ENCODE measurements at regions of chr15 and their contacts with region 1.

Region 1: DNA sequence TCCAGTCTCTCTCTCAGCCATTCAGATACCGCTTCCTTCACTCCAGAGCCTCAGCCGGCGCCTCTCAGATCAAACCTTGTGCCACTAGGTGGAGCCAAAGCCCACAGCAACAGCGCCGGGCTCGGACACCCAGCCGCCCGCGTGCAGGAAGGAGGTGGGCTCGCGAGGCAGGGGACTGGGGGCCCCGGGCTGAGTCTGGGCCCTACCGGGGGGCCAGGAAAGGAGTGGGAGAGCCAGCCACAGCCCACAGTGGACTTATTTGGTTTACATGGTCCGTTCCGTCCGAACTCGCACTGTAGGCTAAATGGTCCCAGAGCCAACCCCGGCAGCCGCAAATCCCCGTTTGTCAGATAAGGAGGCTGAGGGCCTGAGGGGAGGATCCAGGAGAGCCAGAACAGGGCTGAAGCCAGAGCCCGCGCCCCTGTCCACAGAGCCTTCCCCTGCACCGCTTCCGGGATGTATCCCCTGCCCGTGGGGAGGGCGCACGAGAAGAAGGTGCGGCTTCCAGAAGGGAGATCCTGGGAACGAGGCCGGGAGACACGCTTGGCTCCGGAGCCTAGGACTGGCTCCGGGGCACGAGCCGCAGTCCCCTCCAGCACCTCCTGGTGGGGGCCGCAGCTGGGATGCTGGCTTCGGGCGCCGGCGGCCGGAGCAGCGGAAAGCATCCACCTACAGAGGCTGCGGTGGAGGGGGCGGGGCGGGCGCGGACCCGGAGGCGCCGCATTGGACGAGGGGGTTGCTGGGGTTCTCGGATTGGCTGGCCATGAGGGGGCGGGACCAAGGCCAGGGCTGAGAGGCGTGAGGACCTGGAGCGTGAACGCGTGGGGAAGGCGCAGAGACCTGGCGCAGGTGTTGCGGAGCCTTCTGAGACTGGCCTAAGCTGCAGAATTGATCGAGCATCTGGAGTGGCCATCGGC is 6.5 kb upstream of the CYP11A1 start:
- DNase-seq: peak; percentile 95
- ATAC-seq: peak; percentile 99

Region 2: GRCh38 chr15:74438721-74439316 is 64.8 kb after region 1 on chr15:
- intact Hi-C with region 1: loop called in 1 of 2 experiments (anchors 2 kb)
- DNase-seq: peak; percentile 74
- ATAC-seq: peak; percentile 59

Region 3: DNA sequence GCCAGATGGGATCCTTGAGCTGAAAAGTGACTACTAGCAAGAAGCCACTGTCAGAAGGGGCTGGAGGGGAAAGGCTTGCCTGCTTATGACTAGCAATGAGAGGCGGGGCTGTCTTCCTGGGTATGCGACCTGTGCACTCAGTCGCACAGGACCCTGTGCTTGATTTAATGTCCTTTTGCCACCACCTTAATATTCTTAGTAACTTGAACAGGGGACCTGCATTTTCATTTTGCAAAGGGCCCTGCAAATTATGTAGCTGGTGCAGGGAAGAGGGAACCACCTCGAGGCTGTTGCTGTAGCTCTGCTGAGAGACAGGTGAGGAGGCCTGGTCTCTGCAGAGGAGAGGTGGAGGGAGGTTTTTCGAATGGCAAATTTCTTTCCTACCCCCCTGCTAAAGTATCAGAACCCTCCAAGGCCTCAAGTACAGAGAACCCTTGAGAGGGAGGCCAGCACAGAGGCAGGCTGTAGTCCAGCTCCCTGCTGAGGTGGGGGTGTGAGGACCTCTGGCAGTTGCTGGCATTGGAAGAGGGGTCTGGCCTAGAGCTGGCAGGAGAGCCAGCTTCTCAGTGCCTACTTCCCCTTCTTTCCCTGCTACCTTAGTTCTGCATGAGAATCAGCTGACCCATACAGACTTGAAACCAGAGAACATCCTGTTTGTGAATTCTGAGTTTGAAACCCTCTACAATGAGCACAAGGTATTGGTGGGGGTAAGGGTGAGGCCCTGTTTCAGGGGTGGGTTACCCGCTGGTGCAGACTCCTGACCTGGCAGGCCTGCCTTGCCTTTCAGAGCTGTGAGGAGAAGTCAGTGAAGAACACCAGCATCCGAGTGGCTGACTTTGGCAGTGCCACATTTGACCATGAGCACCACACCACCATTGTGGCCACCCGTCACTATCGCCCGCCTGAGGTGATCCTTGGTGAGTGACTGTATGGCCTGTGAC is 253.0 kb after region 1 on chr15:
- intact Hi-C with region 1: loop called (anchors 5 kb)
- DNase-seq: no peak
- ATAC-seq: no peak

Region 4: DNA sequence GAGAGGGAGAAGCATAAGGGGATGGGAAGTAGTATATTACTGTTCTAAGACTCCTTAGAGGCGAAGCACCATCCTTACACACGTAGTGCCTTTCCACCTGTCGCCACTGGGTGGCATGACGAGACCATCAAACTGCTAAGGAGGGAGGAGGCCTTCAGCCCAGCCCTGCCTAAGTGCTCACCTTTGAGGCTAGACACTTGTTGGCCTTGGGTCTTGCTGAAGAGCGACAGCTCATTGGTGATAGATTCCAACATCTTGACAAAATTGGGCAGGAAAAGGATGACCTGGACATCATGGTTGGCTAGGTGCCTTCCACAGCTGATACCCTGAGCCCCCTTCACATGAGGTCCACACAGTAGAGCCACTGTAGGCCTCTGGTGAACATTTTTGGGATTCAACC is 261.2 kb after region 1 on chr15:
- intact Hi-C with region 1: loop called in 1 of 2 experiments (anchors 5 kb)
- DNase-seq: peak; percentile 64
- ATAC-seq: peak; percentile 72 to 74

Measured in left cardiac atrium (tissue), 4 donors.